A673 (cell line): ENCODE measurements at regions of chr16 and their contacts with region 1.

Region 1: DNA sequence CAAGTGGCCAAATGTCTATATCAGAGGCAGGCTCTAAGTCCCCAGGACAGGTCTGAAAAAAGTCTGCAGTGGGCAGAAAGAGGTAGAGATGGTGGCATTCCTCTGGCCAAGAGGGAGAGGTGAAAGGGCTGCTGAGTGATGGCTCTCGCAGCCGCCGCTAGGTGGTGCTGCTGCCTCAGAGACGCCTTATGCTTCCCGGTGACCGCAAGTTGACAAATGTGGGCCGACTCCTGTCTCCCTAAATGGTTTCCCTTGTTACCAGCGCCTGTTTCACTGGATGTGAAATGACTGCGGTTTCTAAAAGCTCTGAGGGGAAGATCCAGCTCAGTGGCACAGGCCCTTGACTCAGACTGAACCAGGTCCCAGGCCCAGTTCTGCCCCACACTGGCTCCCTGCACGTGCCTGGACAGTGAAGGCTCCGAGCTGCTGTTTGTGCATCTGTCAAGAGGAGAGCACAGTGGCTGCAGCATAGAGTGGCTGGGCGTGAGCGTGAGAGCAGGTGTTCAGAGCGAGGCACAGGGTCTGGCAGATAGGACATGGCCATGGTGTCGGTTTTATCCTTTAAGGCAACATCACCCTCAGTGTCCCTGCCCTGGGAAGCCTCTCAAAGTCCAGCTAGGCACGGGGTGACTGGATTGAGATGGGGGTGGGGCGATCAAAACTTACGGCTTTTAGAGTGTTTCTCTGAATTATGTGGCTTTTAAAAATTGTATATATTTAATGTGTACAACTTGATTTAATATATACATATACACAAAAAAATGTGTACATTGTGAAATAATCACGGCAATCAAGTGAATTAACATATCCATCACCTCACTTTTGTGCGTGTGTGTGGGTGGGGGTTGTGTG is 19.9 kb downstream of the CLEC16A start:
- DNase-seq: peak; percentile 83
- H3K4me3 ChIP-seq: no peak overlapping the region
- H3K27ac ChIP-seq: no peak overlapping the region
- H3K4me1 ChIP-seq: no peaks in the 10 kb centered on the region
- H3K27me3 ChIP-seq: no peaks in the 10 kb centered on the region
- CTCF ChIP-seq: peak; percentile 98

Region 2: DNA sequence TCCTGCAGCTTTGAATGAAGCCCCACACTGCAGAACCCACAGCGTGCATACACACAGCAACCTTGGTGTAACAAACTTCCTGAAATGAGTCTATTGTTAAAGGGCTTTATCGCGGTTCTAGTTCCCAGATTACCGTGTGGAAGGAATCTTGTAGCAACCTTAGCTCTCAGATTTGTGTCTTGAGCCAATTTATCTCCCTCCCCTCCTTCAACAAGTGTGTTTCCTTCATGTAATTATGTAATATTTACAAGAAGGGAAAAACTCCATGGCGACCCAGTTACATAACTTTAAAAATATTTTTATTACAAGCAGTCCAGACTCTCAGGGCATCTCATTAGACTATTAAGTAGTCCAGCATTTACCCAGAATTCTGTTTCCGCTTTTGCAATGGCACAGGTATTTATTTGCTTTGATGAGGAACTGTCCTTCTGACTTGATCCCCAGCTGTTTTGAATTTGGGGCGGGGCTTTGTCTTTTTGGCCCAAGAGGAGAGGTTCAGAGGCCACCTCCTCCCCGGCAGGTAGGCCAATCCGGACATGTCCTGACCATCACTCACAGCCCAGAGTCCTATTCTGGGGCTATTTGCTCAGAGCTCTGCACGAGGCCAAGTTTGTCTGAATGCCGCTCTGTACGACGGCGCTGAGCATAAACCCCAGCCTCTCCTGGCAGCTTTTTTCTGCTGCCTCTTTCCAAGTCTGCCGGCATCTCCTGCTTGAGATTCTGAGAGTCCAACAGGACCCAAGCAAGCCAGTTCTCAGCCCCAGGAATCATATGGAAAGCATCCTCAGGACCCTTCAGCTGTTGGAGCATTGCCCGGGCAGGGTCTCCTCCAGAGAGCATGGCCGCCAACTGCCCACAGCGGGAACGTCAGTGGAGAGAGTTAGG is 15.7 kb after region 1 on chr16:
- CTCF ChIA-PET with region 1: no interaction called
- POLR2A ChIA-PET with region 1: no interaction called
- intact Hi-C with region 1: no loop called
- DNase-seq: no peak
- H3K4me3 ChIP-seq: no peak overlapping the region
- H3K27ac ChIP-seq: no peak overlapping the region
- H3K4me1 ChIP-seq: no peaks in the 10 kb centered on the region
- H3K27me3 ChIP-seq: no peaks in the 10 kb centered on the region
- CTCF ChIP-seq: no peak

Region 3: GRCh38 chr16:11819798-11820197 is 855.5 kb after region 1 on chr16:
- CTCF ChIA-PET with region 1: no interaction called
- POLR2A ChIA-PET with region 1: no interaction called
- intact Hi-C with region 1: loop called (anchors 10 kb)
- DNase-seq: no peak
- H3K4me3 ChIP-seq: no peak overlapping the region
- H3K27ac ChIP-seq: no peak overlapping the region
- H3K4me1 ChIP-seq: no peaks in the 10 kb centered on the region
- H3K27me3 ChIP-seq: no peaks in the 10 kb centered on the region
- CTCF ChIP-seq: no peak

Region 4: GRCh38 chr16:12613131-12613991 is 1649.1 kb after region 1 on chr16:
- CTCF ChIA-PET with region 1: no interaction called
- POLR2A ChIA-PET with region 1: no interaction called
- intact Hi-C with region 1: no loop called
- DNase-seq: no peak
- H3K4me3 ChIP-seq: no peak overlapping the region
- H3K27ac ChIP-seq: no peak overlapping the region
- H3K4me1 ChIP-seq: no peaks in the 10 kb centered on the region
- H3K27me3 ChIP-seq: no peaks in the 10 kb centered on the region
- CTCF ChIP-seq: no peak